ENCODE measurements at regions of chr17 and their contacts with region 1.

Region 1: DNA sequence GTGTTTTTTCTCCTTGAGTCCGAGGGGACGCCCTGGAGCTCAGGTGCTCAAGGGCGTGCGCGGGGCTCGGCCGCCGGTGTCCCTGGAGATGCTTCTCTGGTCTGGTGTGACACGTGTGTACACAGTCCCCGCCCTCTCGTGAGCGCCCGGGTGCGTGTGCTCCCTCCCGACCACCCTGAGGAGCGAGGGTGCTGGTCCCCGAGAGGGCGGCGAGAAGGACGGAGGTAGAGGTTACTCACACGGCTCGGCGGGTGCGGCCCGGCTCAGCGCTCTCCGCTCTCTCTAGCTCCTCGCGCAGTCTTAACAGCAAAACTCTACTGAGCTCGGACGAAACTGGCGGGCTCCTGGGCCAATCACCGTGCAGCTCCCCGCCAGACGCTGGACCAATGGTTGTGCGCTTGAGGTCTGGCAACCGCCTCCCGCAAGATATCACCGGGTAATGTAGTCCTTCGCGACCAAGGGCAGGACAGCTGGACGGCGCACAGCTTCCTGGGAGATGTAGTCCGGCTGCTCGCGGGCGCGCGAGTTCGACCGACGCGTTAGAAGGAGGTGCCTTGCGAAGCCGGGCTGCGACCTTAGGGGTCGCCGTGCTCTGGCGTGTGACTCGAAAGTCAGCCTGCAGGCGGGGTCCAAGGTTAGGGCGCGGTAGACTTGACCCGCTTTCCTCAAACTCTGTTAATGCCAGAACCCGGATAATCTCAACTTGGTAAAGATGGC is at the start of gene SLC25A19:
- DNase-seq: peak; percentile 91 to 99 (median 94)
- ATAC-seq: peak; percentile 87
- H3K4me3 ChIP-seq: peak within 1 kb of the TSS; percentile 64
- H3K4me3 Mint-ChIP-seq: peak within 1 kb of the TSS; percentile 99
- H3K27ac ChIP-seq: peak within 1 kb of the TSS; percentile 95 to 99
- H3K27ac Mint-ChIP-seq: peak within 1 kb of the TSS; percentile 98
- H3K4me1 ChIP-seq: peaks cover 21% of the 10 kb centered on the region
- H3K4me1 Mint-ChIP-seq: peaks cover 22% of the 10 kb centered on the region
- H3K27me3 ChIP-seq: no peaks in the 10 kb centered on the region
- H3K27me3 Mint-ChIP-seq: no peaks in the 10 kb centered on the region
- CTCF ChIP-seq: peak; percentile 45
- total RNA-seq, gene SLC25A19: 11.1 to 12.0 TPM

Region 2: DNA sequence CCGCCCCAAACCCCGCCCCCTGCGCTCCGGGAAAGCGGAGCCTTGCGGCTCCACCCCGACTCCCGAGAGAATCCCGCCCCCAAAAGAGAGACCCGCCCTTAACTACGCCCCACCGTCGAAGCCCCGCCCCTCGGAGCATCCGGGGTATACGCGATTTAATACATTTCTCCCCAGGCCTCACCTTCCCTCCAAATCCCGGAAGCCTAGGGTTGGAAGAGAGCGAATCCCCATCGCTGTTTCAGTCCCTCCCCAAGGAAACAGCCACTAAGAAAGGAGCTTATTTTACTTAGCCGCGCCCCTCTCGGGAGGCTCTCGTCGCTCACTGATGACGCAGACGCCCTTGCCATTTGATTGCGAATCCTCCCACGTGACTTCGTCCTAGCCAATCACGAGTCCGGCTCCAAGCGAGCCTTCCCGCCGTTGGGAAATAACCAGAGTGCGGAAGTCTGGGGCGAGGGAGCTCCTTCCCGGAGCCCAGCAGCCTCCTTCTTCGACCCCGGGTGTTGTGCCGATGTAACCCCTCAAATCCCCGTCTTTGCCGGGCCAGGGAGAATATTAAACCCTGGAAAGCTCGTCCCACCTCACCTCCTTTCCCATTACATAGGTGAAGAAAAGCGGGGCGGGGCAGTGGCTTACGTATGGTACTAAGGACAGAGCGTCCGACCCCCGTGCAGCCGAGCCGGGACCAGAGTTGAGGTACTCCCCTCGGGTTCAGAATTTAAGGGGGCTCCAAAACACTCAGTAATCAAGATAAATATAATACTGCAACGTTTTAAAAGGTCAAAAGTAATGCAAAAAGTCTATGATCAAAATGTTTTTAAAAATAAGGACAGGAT is 416.0 kb before region 1 on chr17:
- CTCF ChIA-PET with region 1: no interaction called
- POLR2A ChIA-PET with region 1: interaction called, 15 read pairs
- intact Hi-C with region 1: no loop called
- DNase-seq: peak; percentile 98 to 100 (median 99)
- ATAC-seq: peak; percentile 94
- H3K4me3 ChIP-seq: peak overlapping the region; percentile 67
- H3K4me3 Mint-ChIP-seq: peak overlapping the region; percentile 90
- H3K27ac ChIP-seq: peak overlapping the region; percentile 89 to 92
- H3K27ac Mint-ChIP-seq: peak overlapping the region; percentile 92
- H3K4me1 ChIP-seq: peaks cover 25% of the 10 kb centered on the region
- H3K4me1 Mint-ChIP-seq: peaks cover 24% of the 10 kb centered on the region
- H3K27me3 ChIP-seq: no peaks in the 10 kb centered on the region
- H3K27me3 Mint-ChIP-seq: no peaks in the 10 kb centered on the region
- CTCF ChIP-seq: no peak

Region 3: GRCh38 chr17:75277664-75278071 is 11.6 kb before region 1 on chr17:
- CTCF ChIA-PET with region 1: no interaction called
- POLR2A ChIA-PET with region 1: interaction called, 11 read pairs
- intact Hi-C with region 1: no loop called
- DNase-seq: no peak
- ATAC-seq: no peak
- H3K4me3 ChIP-seq: no peak overlapping the region
- H3K4me3 Mint-ChIP-seq: no peak overlapping the region
- H3K27ac ChIP-seq: no peak overlapping the region
- H3K27ac Mint-ChIP-seq: no peak overlapping the region
- H3K4me1 ChIP-seq: peaks cover 6% of the 10 kb centered on the region
- H3K4me1 Mint-ChIP-seq: peaks cover 2% of the 10 kb centered on the region
- H3K27me3 ChIP-seq: no peaks in the 10 kb centered on the region
- H3K27me3 Mint-ChIP-seq: no peaks in the 10 kb centered on the region
- CTCF ChIP-seq: no peak

Region 4: GRCh38 chr17:75325827-75326225 is 36.6 kb after region 1 on chr17:
- CTCF ChIA-PET with region 1: interaction called, 19 read pairs
- POLR2A ChIA-PET with region 1: interaction called, 24 read pairs
- intact Hi-C with region 1: loop called (anchors 2 to 5 kb)
- DNase-seq: peak in 2 of 14 experiments; percentile 50 to 55
- ATAC-seq: no peak
- H3K4me3 ChIP-seq: no peak overlapping the region
- H3K4me3 Mint-ChIP-seq: no peak overlapping the region
- H3K27ac ChIP-seq: peak overlapping the region; percentile 34 to 36
- H3K27ac Mint-ChIP-seq: peak overlapping the region; percentile 18
- H3K4me1 ChIP-seq: peaks cover 25% of the 10 kb centered on the region
- H3K4me1 Mint-ChIP-seq: peaks cover 35% of the 10 kb centered on the region
- H3K27me3 ChIP-seq: no peaks in the 10 kb centered on the region
- H3K27me3 Mint-ChIP-seq: no peaks in the 10 kb centered on the region
- CTCF ChIP-seq: no peak

Region 5: GRCh38 chr17:75393523-75394331 is 104.5 kb after region 1 on chr17:
- CTCF ChIA-PET with region 1: interaction called, 5 read pairs
- POLR2A ChIA-PET with region 1: interaction called, 14 read pairs
- intact Hi-C with region 1: no loop called
- DNase-seq: peak; percentile 37 to 92 (median 77)
- ATAC-seq: peak; percentile 86
- H3K4me3 ChIP-seq: peak overlapping the region; percentile 68
- H3K4me3 Mint-ChIP-seq: peak overlapping the region; percentile 92
- H3K27ac ChIP-seq: peak overlapping the region; percentile 23 to 63
- H3K27ac Mint-ChIP-seq: peak overlapping the region; percentile 91
- H3K4me1 ChIP-seq: peaks cover 52% of the 10 kb centered on the region
- H3K4me1 Mint-ChIP-seq: peaks cover 88% of the 10 kb centered on the region
- H3K27me3 ChIP-seq: no peaks in the 10 kb centered on the region
- H3K27me3 Mint-ChIP-seq: no peaks in the 10 kb centered on the region
- CTCF ChIP-seq: no peak

Region 6: GRCh38 chr17:75456417-75457046 is 167.3 kb after region 1 on chr17 and contains the start of gene TMEM94:
- CTCF ChIA-PET with region 1: interaction called, 5 read pairs
- POLR2A ChIA-PET with region 1: interaction called, 6 read pairs
- intact Hi-C with region 1: loop called in 1 of 2 experiments (anchors 5 kb)
- DNase-seq: peak; percentile 79 to 97 (median 88)
- ATAC-seq: peak; percentile 96
- H3K4me3 ChIP-seq: peak within 1 kb of the TSS; percentile 70
- H3K4me3 Mint-ChIP-seq: peak within 1 kb of the TSS; percentile 100
- H3K27ac ChIP-seq: peak within 1 kb of the TSS; percentile 23 to 59
- H3K27ac Mint-ChIP-seq: peak within 1 kb of the TSS; percentile 91
- H3K4me1 ChIP-seq: peaks cover 17% of the 10 kb centered on the region
- H3K4me1 Mint-ChIP-seq: peaks cover 29% of the 10 kb centered on the region
- H3K27me3 ChIP-seq: no peaks in the 10 kb centered on the region
- H3K27me3 Mint-ChIP-seq: no peaks in the 10 kb centered on the region
- CTCF ChIP-seq: no peak
- total RNA-seq, gene TMEM94: 52.8 to 57.3 TPM